HepG2 (cell line): ENCODE measurements at regions of chr15 and their contacts with region 1.

Region 1: GRCh38 chr15:73873889-73874511 is 636 bp downstream of the TBC1D21 start:
- DNase-seq: peak; percentile 52
- ATAC-seq: no peak
- H3K4me3 ChIP-seq: no peak overlapping the region
- H3K27ac ChIP-seq: no peak overlapping the region
- H3K4me1 ChIP-seq: no peaks in the 10 kb centered on the region
- H3K27me3 ChIP-seq: peaks cover 0 to 5% of the 10 kb centered on the region in 2 experiments; a peak in 1 of 5 replicates
- CTCF ChIP-seq: peak; percentile 62
- EP300 ChIP-seq: no peak
- POLR2A ChIP-seq: no peak
- RAD21 ChIP-seq: no peak

Region 2: GRCh38 chr15:73908030-73908821 is 34.2 kb after region 1 on chr15:
- CTCF ChIA-PET with region 1: interaction called, 21 read pairs
- POLR2A ChIA-PET with region 1: no interaction called
- in situ Hi-C with region 1: loop called (anchors 5 kb)
- intact Hi-C with region 1: loop called (anchors 1 kb)
- DNase-seq: peak; percentile 42
- ATAC-seq: peak; percentile 99
- H3K4me3 ChIP-seq: no peak overlapping the region
- H3K27ac ChIP-seq: no peak overlapping the region
- H3K4me1 ChIP-seq: peaks cover 6% of the 10 kb centered on the region; the same call in 1 of the 2 replicates
- H3K27me3 ChIP-seq: peaks cover 0 to 3% of the 10 kb centered on the region in 2 experiments; a peak in 3 of 5 replicates
- CTCF ChIP-seq: peak; percentile 97
- EP300 ChIP-seq: no peak
- POLR2A ChIP-seq: no peak
- RAD21 ChIP-seq: peak; percentile 79